Aorta (tissue), 5 donors: ENCODE measurements at regions of chr7 and their contacts with region 1.

Region 1: DNA sequence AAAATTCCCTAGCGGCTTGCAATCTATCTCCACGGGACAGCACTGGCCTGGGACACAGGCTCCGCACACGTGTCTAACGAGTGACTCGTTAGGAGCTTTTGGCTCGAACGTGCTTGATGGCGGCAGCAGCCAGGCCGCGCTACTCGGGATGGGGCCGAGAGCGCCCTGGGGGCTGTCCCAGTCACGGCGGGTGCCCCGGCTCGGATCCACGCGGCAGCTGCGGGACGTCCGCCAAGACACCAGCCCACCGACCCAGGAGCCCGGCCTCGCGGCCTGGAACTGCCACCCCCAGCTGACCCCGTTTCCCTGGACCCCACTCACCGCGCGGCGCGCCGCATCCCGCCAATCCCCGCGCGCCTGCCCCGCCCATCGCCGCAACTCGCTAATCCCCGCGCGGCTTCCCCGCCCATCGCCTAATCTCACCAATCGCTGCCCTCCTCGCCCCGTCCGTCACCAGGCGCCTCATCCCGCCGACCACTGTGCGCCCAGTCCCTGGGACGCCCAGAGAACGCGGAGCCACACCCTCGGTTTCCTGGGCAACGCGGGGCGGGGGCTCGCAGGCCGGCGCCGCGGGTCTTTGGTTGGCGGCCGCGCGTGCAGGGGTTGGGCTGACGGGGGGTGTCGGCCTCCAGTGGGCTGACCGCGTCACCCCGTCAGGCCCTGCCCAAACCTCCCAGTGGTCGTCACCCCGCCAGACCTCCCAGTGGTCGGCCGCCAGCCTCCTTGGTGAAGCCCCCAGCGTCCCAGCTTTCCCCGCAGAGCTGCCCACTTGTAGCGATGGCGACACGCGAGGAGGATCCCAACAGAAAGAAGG is at the start of gene POLD2:
- DNase-seq: peak; percentile 99 to 100
- ATAC-seq: peak; percentile 99
- H3K4me3 ChIP-seq: peak within 1 kb of the TSS; percentile 20 to 31
- H3K27ac ChIP-seq: peak within 1 kb of the TSS in 1 of 2 donors; percentile 61
- H3K4me1 ChIP-seq: peaks cover 0 to 2% of the 10 kb centered on the region in 2 donors
- H3K27me3 ChIP-seq: no peaks in the 10 kb centered on the region
- total RNA-seq, gene POLD2: 49.5 to 53.4 TPM

Region 2: DNA sequence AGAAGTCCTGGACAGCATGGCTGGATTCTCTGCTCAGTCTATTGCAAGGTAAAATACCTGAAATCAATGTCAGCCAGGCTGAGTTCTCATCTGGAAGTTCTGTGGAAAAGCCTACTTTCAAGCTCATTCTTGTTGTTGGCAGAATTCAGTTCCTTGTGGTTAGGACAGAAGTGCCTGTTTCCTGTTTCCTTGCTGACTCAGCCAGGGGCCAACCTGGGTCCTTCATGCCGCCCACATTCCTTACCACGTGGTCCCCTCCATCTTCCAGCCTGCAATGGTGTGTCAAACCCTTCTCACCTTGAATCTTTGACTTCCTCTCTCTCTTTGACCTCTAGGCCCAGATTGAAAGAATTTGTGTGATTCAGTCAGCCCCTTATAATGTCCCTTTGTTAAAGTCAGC is 737.5 kb before region 1 on chr7:
- intact Hi-C with region 1: no loop called
- DNase-seq: no peak
- ATAC-seq: no peak
- H3K4me3 ChIP-seq: no peak overlapping the region
- H3K27ac ChIP-seq: no peak overlapping the region
- H3K4me1 ChIP-seq: no peaks in the 10 kb centered on the region
- H3K27me3 ChIP-seq: no peaks in the 10 kb centered on the region

Region 3: GRCh38 chr7:43750016-43750887 is 373.1 kb before region 1 on chr7:
- intact Hi-C with region 1: no loop called
- DNase-seq: no peak
- ATAC-seq: no peak
- H3K4me3 ChIP-seq: no peak overlapping the region
- H3K27ac ChIP-seq: no peak overlapping the region
- H3K4me1 ChIP-seq: no peaks in the 10 kb centered on the region
- H3K27me3 ChIP-seq: no peaks in the 10 kb centered on the region

Region 4: DNA sequence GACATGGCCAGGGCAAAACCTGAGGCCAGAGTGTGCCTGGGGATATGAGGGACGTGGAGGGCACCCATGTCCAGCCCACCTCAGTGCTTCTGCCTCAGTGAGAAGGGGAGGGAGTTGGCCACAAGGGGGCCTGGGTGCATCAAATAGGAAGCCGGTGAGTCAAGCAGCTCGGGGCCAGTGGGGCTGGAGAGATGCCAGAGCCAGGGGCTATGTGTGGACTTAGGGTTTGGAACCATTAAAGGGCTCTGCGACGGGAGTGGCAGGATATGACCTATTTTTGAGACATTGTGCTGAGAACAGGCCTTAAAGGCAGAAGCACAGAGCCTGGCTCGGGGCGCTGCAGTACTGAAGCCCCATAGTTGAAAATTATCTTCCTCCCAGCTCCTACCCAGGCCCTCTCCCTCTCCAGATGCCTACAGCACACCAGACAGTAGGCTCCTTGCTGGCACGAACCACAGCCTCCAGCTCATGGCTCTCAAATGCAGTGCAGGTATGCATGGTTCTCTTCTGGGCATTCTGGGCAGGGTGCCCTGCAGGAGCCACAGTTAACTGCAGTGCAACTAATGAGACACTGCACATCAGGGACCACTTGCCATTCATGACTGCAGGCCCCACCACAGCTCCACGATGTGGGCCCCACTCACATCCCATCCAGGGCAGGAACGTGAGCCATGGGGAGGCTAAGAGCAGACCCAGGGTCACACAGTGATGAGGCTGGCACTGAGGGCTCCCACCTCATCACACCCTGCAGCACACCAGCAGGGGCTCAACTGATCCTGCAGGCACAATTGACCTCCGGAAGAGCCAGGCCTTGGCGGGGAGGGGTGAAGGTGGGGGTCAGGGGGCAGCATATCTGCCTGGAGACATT is 50.8 kb before region 1 on chr7:
- intact Hi-C with region 1: loop called in 1 of 2 experiments (anchors 5 kb)
- DNase-seq: peak; percentile 93 to 96
- ATAC-seq: peak; percentile 77
- H3K4me3 ChIP-seq: no peak overlapping the region
- H3K27ac ChIP-seq: peak overlapping the region in 1 of 2 donors; percentile 49
- H3K4me1 ChIP-seq: no peaks in the 10 kb centered on the region
- H3K27me3 ChIP-seq: no peaks in the 10 kb centered on the region

Region 5: DNA sequence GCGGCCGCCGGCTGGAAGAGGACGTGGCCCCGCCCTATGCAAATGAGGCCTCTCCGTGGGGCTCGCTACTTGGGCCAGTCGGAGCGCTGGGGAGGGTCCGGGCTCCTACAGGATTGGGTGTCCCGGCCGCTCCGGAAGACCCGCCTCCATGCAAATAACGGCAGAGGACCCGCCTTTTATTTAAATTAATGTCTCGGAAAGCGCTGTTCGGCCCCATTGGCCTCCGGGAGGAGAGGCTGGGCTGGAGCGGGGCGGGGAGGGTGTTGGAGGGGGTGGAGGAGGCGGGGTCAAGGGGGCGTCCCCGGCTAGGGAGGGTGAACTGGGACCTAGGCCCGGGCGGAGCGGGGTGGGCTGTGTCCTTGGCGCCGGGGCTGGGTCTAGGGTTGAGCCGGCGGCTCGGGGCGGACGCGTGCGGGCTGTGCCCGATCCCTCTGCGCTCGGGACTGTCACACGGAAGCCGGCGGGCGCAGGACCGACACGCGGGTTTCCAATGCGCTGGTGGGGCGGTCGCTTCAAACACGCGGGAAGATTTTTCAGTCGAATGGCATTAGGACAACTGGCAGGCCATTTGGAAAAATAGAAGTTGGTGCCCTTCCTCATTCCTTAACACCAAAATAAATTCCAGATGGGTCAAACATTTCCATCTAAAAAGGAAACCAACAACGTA is 40.7 kb before region 1 on chr7:
- intact Hi-C with region 1: loop called in 1 of 2 experiments (anchors 5 kb)
- DNase-seq: peak; percentile 99 to 100
- ATAC-seq: peak; percentile 96
- H3K4me3 ChIP-seq: peak overlapping the region in 1 of 2 donors; percentile 27
- H3K27ac ChIP-seq: peak overlapping the region; percentile 55 to 57
- H3K4me1 ChIP-seq: peaks cover 0 to 8% of the 10 kb centered on the region in 2 donors
- H3K27me3 ChIP-seq: no peaks in the 10 kb centered on the region

Region 6: GRCh38 chr7:44145969-44146911 is 22.8 kb after region 1 on chr7:
- intact Hi-C with region 1: loop called in 1 of 2 experiments (anchors 2 kb)
- DNase-seq: peak; percentile 90 to 96
- ATAC-seq: peak; percentile 89
- H3K4me3 ChIP-seq: peak overlapping the region; percentile 13 to 24
- H3K27ac ChIP-seq: no peak overlapping the region
- H3K4me1 ChIP-seq: no peaks in the 10 kb centered on the region
- H3K27me3 ChIP-seq: no peaks in the 10 kb centered on the region

Region 7: DNA sequence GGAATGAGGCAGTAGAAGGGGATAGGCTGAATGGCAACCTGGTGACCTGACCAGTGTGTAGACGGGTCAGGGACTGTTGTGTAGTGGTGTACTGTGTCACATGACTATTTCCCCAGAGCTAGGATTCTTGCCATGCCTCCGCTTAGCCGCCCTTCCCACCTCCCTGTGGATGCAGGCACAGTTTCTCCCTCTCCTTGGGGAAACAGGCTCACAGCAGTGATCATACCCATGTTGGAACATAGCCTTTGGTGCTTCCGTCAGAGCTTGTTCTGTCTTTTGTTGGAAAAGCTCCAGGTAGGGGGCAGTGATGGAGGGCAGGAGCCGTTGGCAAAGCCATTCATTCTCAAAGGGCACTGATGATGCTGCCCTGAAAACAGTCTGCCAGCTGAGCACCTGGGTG is 527.4 kb after region 1 on chr7:
- intact Hi-C with region 1: no loop called
- DNase-seq: peak in 1 of 2 donors; percentile 17
- ATAC-seq: no peak
- H3K4me3 ChIP-seq: no peak overlapping the region
- H3K27ac ChIP-seq: no peak overlapping the region
- H3K4me1 ChIP-seq: no peaks in the 10 kb centered on the region
- H3K27me3 ChIP-seq: no peaks in the 10 kb centered on the region